Activated T-helper 1 cell treated with anti-CD3 and anti-CD28 coated beads, Interleukin-12 subunit alpha, Interleukin-12 subunit beta, Interleukin-2, Interleukin-4 antibody, amounts not matched to agents 30 ng/mL and 10 ng/mL and 1 ng/mL, durations not matched to agents 14 hours and 24 hours and 36 hours (primary cell): ENCODE measurements at regions of chr6 and their contacts with region 1.

Region 1: GRCh38 chr6:149122850-149123821 is 194.4 kb upstream of the TAB2 start:
- DNase-seq: no peak
- H3K4me3 Mint-ChIP-seq: peak overlapping the region; percentile 48
- H3K27ac Mint-ChIP-seq: peak overlapping the region; percentile 82
- H3K4me1 Mint-ChIP-seq: peaks cover 52% of the 10 kb centered on the region
- H3K27me3 Mint-ChIP-seq: no peaks in the 10 kb centered on the region

Region 2: GRCh38 chr6:149112976-149113375 is 10.2 kb before region 1 on chr6:
- intact Hi-C with region 1: loop called (anchors 1 kb)
- DNase-seq: no peak
- H3K4me3 Mint-ChIP-seq: peak overlapping the region; percentile 46
- H3K27ac Mint-ChIP-seq: peak overlapping the region; percentile 89
- H3K4me1 Mint-ChIP-seq: peaks cover 92% of the 10 kb centered on the region
- H3K27me3 Mint-ChIP-seq: no peaks in the 10 kb centered on the region